Activated B cell treated with CpG ODN at 0.5 μM for 24 hours (primary cell): ENCODE measurements at regions of chr12 and their contacts with region 1.

Region 1: GRCh38 chr12:94149119-94149780 is 873 bp downstream of the PLXNC1 start:
- DNase-seq: peak; percentile 71
- ATAC-seq: peak; percentile 29
- H3K4me3 Mint-ChIP-seq: peak overlapping the region; percentile 96
- H3K27ac Mint-ChIP-seq: peak overlapping the region; percentile 70
- H3K4me1 Mint-ChIP-seq: peaks cover 58% of the 10 kb centered on the region
- H3K27me3 Mint-ChIP-seq: no peaks in the 10 kb centered on the region
- CTCF ChIP-seq: no peak

Region 2: DNA sequence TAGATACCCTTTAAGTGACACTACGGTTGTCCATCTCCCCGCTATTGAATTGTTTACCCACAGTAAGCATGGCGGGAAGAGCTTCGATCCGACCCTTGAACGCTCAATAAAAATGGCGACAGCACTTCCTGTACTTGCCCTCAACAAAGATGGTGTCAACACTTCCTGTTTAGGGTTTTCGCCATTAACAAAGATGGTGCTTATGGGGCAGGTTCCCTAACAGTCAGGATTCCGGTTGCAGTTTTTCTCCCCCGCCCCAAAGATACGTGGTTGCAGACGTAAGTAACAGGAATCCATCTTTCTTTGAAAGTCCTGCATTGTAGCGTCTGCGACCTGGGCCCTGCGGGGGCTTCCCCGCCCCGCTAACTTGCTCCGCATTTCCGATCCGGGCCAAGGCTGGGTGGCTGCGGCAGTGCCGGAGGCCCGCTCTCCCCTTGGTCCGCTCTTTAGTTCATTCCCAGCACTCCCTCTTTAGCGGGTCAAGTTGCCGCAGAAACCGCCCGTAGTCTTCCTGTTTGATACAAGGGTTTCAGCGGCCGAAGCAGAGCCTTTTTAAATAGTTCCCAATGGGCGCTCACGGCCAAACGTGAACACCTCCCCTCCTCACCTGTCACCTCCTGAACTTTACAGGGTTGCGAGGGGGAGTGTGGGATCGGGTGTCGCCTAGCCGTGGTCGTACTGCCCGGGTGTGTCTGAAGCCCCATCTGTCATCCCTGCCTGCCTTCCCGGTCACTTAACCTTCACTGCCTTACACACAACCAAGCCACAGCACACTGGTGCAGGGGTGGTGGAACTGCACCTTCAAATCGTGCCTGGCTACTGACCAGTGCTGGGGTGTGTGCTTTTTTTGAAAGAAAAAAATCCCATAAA is 471.8 kb before region 1 on chr12 and contains the start of gene CRADD:
- CTCF ChIA-PET with region 1: no interaction called
- POLR2A ChIA-PET with region 1: no interaction called
- intact Hi-C with region 1: no loop called
- DNase-seq: peak; percentile 72
- ATAC-seq: peak; percentile 94
- H3K4me3 Mint-ChIP-seq: peak within 1 kb of the TSS; percentile 99
- H3K27ac Mint-ChIP-seq: peak within 1 kb of the TSS; percentile 100
- H3K4me1 Mint-ChIP-seq: peaks cover 23% of the 10 kb centered on the region
- H3K27me3 Mint-ChIP-seq: peaks cover 12% of the 10 kb centered on the region
- CTCF ChIP-seq: no peak
- total RNA-seq, gene CRADD: 10.3 and 15.3 TPM in 2 replicates

Region 3: GRCh38 chr12:93979189-93979588 is 170.1 kb before region 1 on chr12:
- CTCF ChIA-PET with region 1: no interaction called
- POLR2A ChIA-PET with region 1: no interaction called
- intact Hi-C with region 1: no loop called
- DNase-seq: no peak
- ATAC-seq: no peak
- H3K4me3 Mint-ChIP-seq: no peak overlapping the region
- H3K27ac Mint-ChIP-seq: no peak overlapping the region
- H3K4me1 Mint-ChIP-seq: no peaks in the 10 kb centered on the region
- H3K27me3 Mint-ChIP-seq: peaks cover 6% of the 10 kb centered on the region
- CTCF ChIP-seq: no peak

Region 4: GRCh38 chr12:94133964-94134795 is 15.1 kb before region 1 on chr12:
- CTCF ChIA-PET with region 1: interaction called, 11 read pairs
- POLR2A ChIA-PET with region 1: no interaction called
- intact Hi-C with region 1: loop called (anchors 1 kb)
- DNase-seq: no peak
- ATAC-seq: peak; percentile 97
- H3K4me3 Mint-ChIP-seq: no peak overlapping the region
- H3K27ac Mint-ChIP-seq: no peak overlapping the region
- H3K4me1 Mint-ChIP-seq: peaks cover 9% of the 10 kb centered on the region
- H3K27me3 Mint-ChIP-seq: no peaks in the 10 kb centered on the region
- CTCF ChIP-seq: peak; percentile 19

Region 5: GRCh38 chr12:94207849-94208621 is 58.8 kb after region 1 on chr12:
- CTCF ChIA-PET with region 1: interaction called, 12 read pairs
- POLR2A ChIA-PET with region 1: interaction called, 64 read pairs
- intact Hi-C with region 1: loop called (anchors 1 kb)
- DNase-seq: peak; percentile 39
- ATAC-seq: peak; percentile 81
- H3K4me3 Mint-ChIP-seq: peak overlapping the region; percentile 82
- H3K27ac Mint-ChIP-seq: peak overlapping the region; percentile 98
- H3K4me1 Mint-ChIP-seq: peaks cover 68% of the 10 kb centered on the region
- H3K27me3 Mint-ChIP-seq: no peaks in the 10 kb centered on the region
- CTCF ChIP-seq: no peak

Region 6: DNA sequence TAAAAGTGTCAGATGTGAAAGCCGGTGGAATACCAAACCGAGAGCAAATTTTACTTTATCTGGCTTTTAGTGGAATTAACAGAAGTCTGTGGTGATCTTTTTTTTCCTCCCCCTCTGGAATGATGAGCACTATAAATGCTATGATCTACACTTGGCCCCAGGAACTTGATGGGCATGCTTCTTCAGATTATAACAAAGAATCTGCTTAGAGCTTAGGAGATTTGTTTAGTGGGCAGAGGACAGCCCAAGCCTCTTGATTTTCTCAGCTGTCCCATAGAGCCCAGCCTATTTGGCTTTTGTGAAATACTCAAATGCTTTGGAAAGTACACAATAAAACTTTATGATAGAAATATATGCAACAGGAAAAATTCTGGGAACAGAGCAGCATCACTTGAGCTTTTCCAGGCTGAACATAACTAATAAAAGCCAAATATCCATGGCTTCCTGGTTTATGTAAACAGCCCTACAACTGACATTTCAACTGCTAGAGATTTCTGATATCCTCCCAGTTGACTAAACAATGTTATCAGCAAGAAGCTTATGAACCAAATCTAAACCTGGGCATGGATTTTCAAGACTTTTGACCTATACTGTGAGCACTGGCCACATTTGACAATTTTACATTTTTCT is 148.7 kb after region 1 on chr12:
- CTCF ChIA-PET with region 1: no interaction called
- POLR2A ChIA-PET with region 1: interaction called, 18 read pairs
- intact Hi-C with region 1: loop called (anchors 1 kb)
- DNase-seq: no peak
- ATAC-seq: no peak
- H3K4me3 Mint-ChIP-seq: peak overlapping the region; percentile 42
- H3K27ac Mint-ChIP-seq: peak overlapping the region; percentile 79
- H3K4me1 Mint-ChIP-seq: peaks cover 56% of the 10 kb centered on the region
- H3K27me3 Mint-ChIP-seq: no peaks in the 10 kb centered on the region
- CTCF ChIP-seq: no peak

Region 7: GRCh38 chr12:94459728-94460615 is 310.7 kb after region 1 on chr12 and contains the start of gene CEP83:
- CTCF ChIA-PET with region 1: no interaction called
- POLR2A ChIA-PET with region 1: interaction called, 3 read pairs
- intact Hi-C with region 1: loop called (anchors 1 kb)
- DNase-seq: peak; percentile 94
- ATAC-seq: peak; percentile 96
- H3K4me3 Mint-ChIP-seq: peak within 1 kb of the TSS; percentile 91
- H3K27ac Mint-ChIP-seq: peak within 1 kb of the TSS; percentile 88
- H3K4me1 Mint-ChIP-seq: peaks cover 23% of the 10 kb centered on the region
- H3K27me3 Mint-ChIP-seq: no peaks in the 10 kb centered on the region
- CTCF ChIP-seq: no peak
- total RNA-seq, gene CEP83: 25.0 and 36.9 TPM in 2 replicates

Region 8: DNA sequence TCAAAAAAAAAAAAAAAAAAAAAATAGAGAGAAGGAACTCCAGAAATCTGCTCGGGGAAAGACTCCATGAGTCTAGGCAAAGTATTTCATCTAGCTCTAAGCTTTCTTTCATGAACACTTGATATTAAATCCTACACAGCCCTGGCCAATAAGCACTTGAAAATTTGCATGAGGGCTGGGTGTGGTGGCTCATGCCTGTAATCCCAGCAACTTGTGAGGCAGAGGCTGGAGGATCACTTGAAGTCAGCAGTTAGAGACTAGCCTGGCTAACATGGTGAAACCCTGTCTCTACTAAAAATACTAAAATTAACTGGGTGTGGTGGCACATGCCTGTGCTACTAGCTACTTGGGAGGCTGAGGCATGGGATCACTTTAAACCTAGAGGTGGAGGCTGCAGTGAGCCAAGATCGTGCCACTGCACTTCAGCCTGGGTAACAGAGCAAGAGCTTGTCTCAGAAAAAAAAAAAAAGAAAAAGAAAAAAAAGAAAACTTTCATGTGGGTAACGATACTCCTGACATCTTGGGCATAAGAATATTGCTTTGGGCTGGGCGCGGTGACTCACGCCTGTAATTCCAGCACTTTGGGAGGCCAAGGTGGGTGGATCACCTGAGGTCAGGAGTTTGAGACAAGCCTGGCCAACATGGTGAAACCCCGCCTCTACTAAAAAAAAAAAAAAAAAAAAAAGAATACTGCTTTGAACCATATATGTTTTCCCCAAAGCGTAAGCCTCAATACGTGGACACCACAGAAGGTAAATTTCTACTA is 1311.8 kb after region 1 on chr12:
- CTCF ChIA-PET with region 1: no interaction called
- POLR2A ChIA-PET with region 1: interaction called, 15 read pairs
- intact Hi-C with region 1: no loop called
- DNase-seq: no peak
- ATAC-seq: no peak
- H3K4me3 Mint-ChIP-seq: no peak overlapping the region
- H3K27ac Mint-ChIP-seq: no peak overlapping the region
- H3K4me1 Mint-ChIP-seq: no peaks in the 10 kb centered on the region
- H3K27me3 Mint-ChIP-seq: no peaks in the 10 kb centered on the region
- CTCF ChIP-seq: no peak